B cell (primary cell): ENCODE measurements at regions of chr2 and their contacts with region 1.

Region 1: GRCh38 chr2:169573160-169573973 is at the start of gene FASTKD1:
- DNase-seq: peak; percentile 90
- ATAC-seq: peak; percentile 100
- H3K4me3 ChIP-seq: peak within 1 kb of the TSS; percentile 74 to 99 (median 89)
- H3K4me3 Mint-ChIP-seq: peak within 1 kb of the TSS; percentile 96
- H3K27ac ChIP-seq: peak within 1 kb of the TSS; percentile 75 to 84
- H3K27ac Mint-ChIP-seq: peak within 1 kb of the TSS; percentile 88
- H3K4me1 ChIP-seq: peaks cover 5 to 6% of the 10 kb centered on the region in 2 donors
- H3K4me1 Mint-ChIP-seq: peaks cover 14% of the 10 kb centered on the region
- H3K27me3 ChIP-seq: no peaks in the 10 kb centered on the region
- H3K27me3 Mint-ChIP-seq: no peaks in the 10 kb centered on the region
- CTCF ChIP-seq: no peak
- total RNA-seq, gene FASTKD1: 28.1 and 31.0 TPM in 2 replicates

Region 2: DNA sequence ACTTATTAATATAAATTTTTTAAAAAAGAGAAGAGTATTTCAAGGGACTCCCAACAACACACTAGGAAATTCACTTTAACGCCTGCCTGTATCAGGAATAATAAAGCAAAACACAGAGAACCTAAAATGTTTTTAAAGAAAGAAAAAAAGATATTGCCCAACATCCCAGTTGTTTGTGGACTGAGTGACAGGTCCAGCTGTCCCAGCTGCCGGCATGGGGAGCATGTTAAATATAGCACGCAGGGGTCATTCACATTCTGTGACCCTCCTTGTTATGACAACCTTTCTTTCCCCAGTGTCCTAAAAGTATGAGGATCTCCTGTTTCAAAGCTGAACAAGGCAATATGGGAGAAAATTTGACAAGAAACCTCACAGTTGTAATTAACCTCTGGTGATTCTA is 59.4 kb before region 1 on chr2:
- CTCF ChIA-PET with region 1: no interaction called
- POLR2A ChIA-PET with region 1: no interaction called
- intact Hi-C with region 1: no loop called
- DNase-seq: no peak
- ATAC-seq: no peak
- H3K4me3 ChIP-seq: no peak overlapping the region
- H3K4me3 Mint-ChIP-seq: no peak overlapping the region
- H3K27ac ChIP-seq: no peak overlapping the region
- H3K27ac Mint-ChIP-seq: no peak overlapping the region
- H3K4me1 ChIP-seq: no peaks in the 10 kb centered on the region
- H3K4me1 Mint-ChIP-seq: no peaks in the 10 kb centered on the region
- H3K27me3 ChIP-seq: no peaks in the 10 kb centered on the region
- H3K27me3 Mint-ChIP-seq: no peaks in the 10 kb centered on the region
- CTCF ChIP-seq: no peak

Region 3: DNA sequence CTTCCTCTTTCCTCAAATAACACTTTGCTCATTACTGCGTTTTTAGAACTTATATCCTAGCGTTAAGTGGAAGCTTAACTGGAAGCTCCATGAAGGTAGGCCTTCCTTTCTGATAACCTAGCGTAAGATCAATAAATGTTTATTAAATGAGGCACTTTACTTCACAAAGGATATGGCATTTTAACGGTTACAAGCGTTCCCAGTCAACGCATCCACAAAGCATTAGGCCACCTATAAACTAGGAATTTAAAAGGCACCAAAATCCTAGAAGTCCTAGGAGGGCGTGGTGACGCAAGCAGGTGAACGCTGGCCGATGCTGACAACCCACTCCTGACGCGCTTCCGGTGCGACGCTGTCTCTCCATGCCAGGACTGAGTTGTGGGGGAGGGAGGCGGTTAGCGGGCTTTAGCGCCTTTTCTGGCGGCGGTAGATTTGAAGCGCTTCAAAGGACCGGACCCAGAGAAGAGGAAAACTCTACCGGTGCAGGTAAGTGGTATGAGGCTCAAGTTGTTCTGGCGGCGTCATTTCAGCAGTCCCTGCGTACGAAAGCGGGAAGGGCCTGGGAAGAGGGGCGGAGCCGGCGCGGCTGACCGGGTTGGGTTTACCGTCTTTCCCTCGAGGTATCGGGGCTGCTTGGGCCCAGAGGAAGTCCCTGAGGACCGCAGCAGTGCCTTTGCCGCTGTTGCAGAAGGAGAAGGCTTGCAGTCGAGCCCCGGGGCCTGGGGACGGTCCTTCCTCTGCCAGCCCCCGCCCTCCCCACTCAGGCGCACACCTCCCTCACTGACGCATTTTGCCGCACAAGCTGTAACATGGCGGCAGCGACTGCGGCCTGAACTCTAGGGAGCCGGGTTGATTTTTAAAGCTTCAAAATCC is 10.9 kb after region 1 on chr2 and contains the start of gene PPIG:
- CTCF ChIA-PET with region 1: interaction called, 14 read pairs
- POLR2A ChIA-PET with region 1: interaction called, 16 read pairs
- intact Hi-C with region 1: loop called (anchors 1 kb)
- DNase-seq: peak; percentile 94
- ATAC-seq: peak; percentile 89
- H3K4me3 ChIP-seq: peak within 1 kb of the TSS; percentile 70 to 99 (median 98)
- H3K4me3 Mint-ChIP-seq: peak within 1 kb of the TSS; percentile 99
- H3K27ac ChIP-seq: peak within 1 kb of the TSS; percentile 96 to 99
- H3K27ac Mint-ChIP-seq: peak within 1 kb of the TSS; percentile 99
- H3K4me1 ChIP-seq: peaks cover 12 to 24% of the 10 kb centered on the region in 2 donors
- H3K4me1 Mint-ChIP-seq: peaks cover 30% of the 10 kb centered on the region
- H3K27me3 ChIP-seq: no peaks in the 10 kb centered on the region
- H3K27me3 Mint-ChIP-seq: no peaks in the 10 kb centered on the region
- CTCF ChIP-seq: no peak
- total RNA-seq, gene PPIG: 78.6 and 82.4 TPM in 2 replicates

Region 4: DNA sequence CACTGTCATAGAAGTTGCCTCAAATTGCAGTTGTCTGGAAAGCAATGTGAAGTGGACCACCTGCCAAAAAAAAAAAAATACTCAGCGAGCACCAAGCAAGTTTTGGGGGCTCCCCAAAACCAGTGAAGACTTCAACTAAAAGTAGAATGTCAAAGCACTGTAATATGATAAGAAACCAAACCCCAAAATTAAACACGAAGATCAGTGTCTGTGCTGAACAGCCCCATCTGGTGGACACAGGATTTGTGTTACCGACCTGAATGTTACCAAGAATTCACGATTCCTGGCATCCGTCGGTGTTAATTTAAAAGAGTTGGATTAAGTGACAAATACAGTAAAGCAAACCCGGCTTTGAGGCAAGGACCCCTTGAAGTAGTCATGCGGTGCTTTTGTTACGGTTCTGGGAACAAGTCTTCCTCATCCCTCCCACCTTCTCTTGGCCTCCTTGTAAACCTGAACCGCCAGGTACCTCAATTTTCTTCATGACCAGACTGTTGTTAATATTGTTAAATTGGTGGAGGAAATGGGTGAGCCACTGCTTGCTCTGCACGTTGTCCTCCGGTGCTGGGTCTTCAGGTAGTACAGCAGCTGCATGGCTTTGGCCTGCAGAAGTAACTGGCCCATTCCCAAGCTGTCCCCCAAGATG is 194.0 kb after region 1 on chr2:
- CTCF ChIA-PET with region 1: no interaction called
- POLR2A ChIA-PET with region 1: no interaction called
- intact Hi-C with region 1: no loop called
- DNase-seq: peak; percentile 72
- ATAC-seq: no peak
- H3K4me3 ChIP-seq: no peak overlapping the region
- H3K4me3 Mint-ChIP-seq: peak overlapping the region; percentile 78
- H3K27ac ChIP-seq: no peak overlapping the region
- H3K27ac Mint-ChIP-seq: no peak overlapping the region
- H3K4me1 ChIP-seq: peaks cover 19% of the 10 kb centered on the region in 2 donors
- H3K4me1 Mint-ChIP-seq: peaks cover 16% of the 10 kb centered on the region
- H3K27me3 ChIP-seq: peaks cover 0 to 32% (median 17%) of the 10 kb centered on the region in 4 experiments
- H3K27me3 Mint-ChIP-seq: peaks cover 20% of the 10 kb centered on the region
- CTCF ChIP-seq: peak; percentile 76

Region 5: DNA sequence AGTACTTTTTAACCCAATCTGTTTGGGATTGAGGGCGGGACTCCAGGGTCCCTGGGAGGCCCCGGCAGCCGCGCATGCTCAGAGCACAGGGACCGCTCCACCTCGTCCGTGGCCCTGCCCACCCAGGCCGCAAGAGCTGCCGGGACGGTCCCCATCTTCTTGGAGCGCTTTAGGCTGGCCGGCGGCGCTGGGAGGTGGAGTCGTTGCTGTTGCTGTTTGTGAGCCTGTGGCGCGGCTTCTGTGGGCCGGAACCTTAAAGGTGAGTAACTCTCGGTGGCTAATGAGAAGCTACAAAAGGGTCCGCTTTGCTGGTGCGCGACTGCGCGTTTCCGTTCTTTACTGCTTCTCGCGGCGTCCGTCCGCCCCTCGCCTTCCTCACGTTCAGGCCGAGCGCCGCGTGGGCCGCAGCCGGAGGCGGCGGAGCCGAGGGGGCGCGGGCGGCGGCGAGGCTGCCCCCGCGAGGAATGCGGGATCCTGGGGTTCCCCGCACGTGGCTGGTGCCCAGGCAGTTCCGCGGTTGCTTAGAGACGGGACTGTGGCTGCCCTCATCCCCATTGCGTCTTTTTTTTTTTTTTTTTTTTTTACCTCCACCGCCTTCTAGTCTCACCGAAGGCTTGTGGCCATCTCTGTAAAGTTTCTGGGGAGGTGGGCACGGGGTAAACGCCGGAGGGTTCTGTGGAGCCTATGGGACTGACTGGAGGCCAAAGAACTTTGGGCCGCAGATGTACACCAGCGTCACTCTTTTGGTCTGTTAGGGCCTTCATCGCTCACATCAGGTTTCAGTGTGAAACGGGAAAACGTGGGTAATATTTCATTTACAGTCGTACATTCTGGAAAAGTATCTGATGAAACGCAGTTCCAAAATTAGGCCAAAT is 225.6 kb after region 1 on chr2 and contains the start of gene SSB:
- CTCF ChIA-PET with region 1: no interaction called
- POLR2A ChIA-PET with region 1: no interaction called
- intact Hi-C with region 1: loop called (anchors 5 kb)
- DNase-seq: peak; percentile 96
- ATAC-seq: peak; percentile 96
- H3K4me3 ChIP-seq: peak within 1 kb of the TSS; percentile 60 to 91 (median 84)
- H3K4me3 Mint-ChIP-seq: peak within 1 kb of the TSS; percentile 95
- H3K27ac ChIP-seq: peak within 1 kb of the TSS; percentile 86 to 95
- H3K27ac Mint-ChIP-seq: peak within 1 kb of the TSS; percentile 88
- H3K4me1 ChIP-seq: peaks cover 10 to 15% of the 10 kb centered on the region in 2 donors
- H3K4me1 Mint-ChIP-seq: peaks cover 25% of the 10 kb centered on the region
- H3K27me3 ChIP-seq: no peaks in the 10 kb centered on the region
- H3K27me3 Mint-ChIP-seq: no peaks in the 10 kb centered on the region
- CTCF ChIP-seq: no peak
- total RNA-seq, gene SSB: 76.2 and 81.3 TPM in 2 replicates

Region 6: DNA sequence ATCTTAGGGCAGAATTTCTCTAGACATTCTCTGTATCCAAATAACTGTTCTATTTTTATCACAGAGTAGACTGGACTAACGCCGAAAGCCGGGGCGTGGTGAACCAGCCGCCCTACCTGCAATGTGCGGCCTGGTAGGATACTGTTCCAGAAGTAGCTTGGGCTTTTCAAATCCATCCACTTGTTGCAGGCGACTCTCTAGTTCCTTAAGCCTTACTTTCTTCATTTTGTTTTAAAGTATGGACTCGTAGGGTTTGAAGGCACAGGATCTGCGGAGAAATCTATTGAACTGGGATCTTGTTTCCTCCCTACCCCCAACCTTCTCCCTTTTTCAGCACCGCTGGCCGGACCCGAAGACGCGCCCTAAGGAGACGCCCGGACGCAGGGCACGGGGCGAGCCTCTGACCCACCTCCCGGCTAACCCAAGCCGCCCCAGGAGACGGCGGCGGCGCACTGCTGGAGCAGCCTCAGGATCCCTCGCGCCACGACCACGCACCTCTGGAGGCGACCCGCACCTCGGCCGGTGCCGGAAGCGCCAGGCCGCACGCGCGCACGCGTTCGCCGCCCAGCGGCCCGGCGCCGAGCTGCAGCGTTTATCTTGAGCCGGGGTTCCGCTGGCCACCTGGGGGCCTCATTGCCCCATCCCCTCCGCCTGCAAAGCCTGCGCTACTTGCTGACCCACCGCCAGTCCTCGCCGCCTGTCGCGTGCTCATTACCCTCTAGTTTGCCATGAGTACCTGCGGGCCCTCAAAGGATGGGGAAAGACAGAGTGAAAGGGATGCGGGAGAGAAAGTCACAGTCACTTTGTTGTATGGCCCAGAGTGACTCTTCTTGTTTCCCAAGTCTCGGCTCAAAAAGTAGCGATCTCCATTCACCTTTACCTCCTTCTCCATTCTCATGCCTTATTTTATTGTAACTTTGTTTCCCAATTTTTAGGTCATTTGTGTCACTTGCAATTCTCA is 251.3 kb after region 1 on chr2 and contains the start of gene METTL5:
- CTCF ChIA-PET with region 1: interaction called, 3 read pairs
- POLR2A ChIA-PET with region 1: no interaction called
- intact Hi-C with region 1: loop called (anchors 2 kb)
- DNase-seq: peak; percentile 86
- ATAC-seq: peak; percentile 74
- H3K4me3 ChIP-seq: peak within 1 kb of the TSS; percentile 64 to 90 (median 68)
- H3K4me3 Mint-ChIP-seq: peak within 1 kb of the TSS; percentile 90
- H3K27ac ChIP-seq: peak within 1 kb of the TSS in 1 of 2 donors; percentile 73
- H3K27ac Mint-ChIP-seq: peak within 1 kb of the TSS; percentile 90
- H3K4me1 ChIP-seq: peaks cover 28 to 34% of the 10 kb centered on the region in 2 donors
- H3K4me1 Mint-ChIP-seq: peaks cover 47% of the 10 kb centered on the region
- H3K27me3 ChIP-seq: no peaks in the 10 kb centered on the region
- H3K27me3 Mint-ChIP-seq: no peaks in the 10 kb centered on the region
- CTCF ChIP-seq: peak; percentile 94
- total RNA-seq, gene METTL5: 36.4 and 37.0 TPM in 2 replicates

Region 7: GRCh38 chr2:170013802-170014551 is 440.6 kb after region 1 on chr2:
- CTCF ChIA-PET with region 1: no interaction called
- POLR2A ChIA-PET with region 1: no interaction called
- intact Hi-C with region 1: no loop called
- DNase-seq: no peak
- ATAC-seq: no peak
- H3K4me3 ChIP-seq: no peak overlapping the region
- H3K4me3 Mint-ChIP-seq: no peak overlapping the region
- H3K27ac ChIP-seq: no peak overlapping the region
- H3K27ac Mint-ChIP-seq: no peak overlapping the region
- H3K4me1 ChIP-seq: no peaks in the 10 kb centered on the region
- H3K4me1 Mint-ChIP-seq: no peaks in the 10 kb centered on the region
- H3K27me3 ChIP-seq: no peaks in the 10 kb centered on the region
- H3K27me3 Mint-ChIP-seq: no peaks in the 10 kb centered on the region
- CTCF ChIP-seq: no peak

Region 8: GRCh38 chr2:171433763-171434670 is 1860.7 kb after region 1 on chr2 and contains the starts of genes DCAF17 and METTL8:
- CTCF ChIA-PET with region 1: no interaction called
- POLR2A ChIA-PET with region 1: no interaction called
- intact Hi-C with region 1: loop called (anchors 10 kb)
- DNase-seq: peak; percentile 96
- ATAC-seq: peak; percentile 89
- H3K4me3 ChIP-seq: peak within 1 kb of the TSS; percentile 67 to 87 (median 80)
- H3K4me3 Mint-ChIP-seq: peak within 1 kb of the TSS; percentile 91
- H3K27ac ChIP-seq: peak within 1 kb of the TSS; percentile 84 to 85
- H3K27ac Mint-ChIP-seq: peak within 1 kb of the TSS; percentile 96
- H3K4me1 ChIP-seq: peaks cover 7 to 10% of the 10 kb centered on the region in 2 donors
- H3K4me1 Mint-ChIP-seq: peaks cover 24% of the 10 kb centered on the region
- H3K27me3 ChIP-seq: no peaks in the 10 kb centered on the region
- H3K27me3 Mint-ChIP-seq: no peaks in the 10 kb centered on the region
- CTCF ChIP-seq: peak; percentile 61
- total RNA-seq, gene DCAF17: 27.9 and 29.4 TPM in 2 replicates
- total RNA-seq, gene METTL8: 57.8 and 58.6 TPM in 2 replicates